ENCODE measurements at regions of chr4 and their contacts with region 1.

Region 1: DNA sequence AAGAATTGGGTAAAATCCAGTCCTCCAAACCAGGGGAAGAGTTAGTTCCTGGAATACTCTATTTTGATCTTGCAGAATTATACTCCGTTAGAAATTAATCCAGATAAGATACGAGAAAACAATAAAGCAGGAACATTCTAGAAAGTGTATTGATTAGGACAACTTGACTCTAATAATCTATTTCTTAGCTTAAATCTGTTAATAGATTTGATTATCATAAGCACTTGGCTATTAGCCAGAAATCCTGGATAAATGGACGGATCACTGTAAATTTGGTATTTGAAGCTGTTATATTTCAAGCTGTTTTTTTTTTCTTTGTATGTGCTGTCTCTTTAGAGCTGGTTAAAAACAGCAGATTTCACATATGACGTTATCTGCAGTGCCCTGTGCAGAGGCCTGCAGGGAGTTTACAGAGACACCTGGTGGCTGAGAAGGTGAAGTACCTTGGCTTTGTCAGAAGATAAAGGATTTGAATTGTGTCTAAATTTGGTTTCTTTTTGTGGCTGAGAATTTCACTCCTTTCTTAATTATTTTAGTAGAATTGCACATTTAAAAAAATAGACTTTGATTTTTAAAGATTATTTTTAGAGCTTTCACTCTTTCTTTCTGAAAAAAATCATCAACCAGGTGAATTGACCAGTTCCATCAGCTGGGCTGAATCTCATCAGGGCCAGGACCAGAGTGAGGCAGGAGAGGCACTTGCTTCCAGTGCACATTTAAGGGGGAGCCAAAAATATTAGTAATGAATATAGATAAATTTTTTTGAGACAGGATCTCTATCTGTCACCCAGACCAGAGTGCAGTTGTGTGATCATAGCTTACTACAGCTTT is 9.7 kb upstream of the CHRNA9 start:
- DNase-seq: peak; percentile 69
- H3K4me3 Mint-ChIP-seq: no peak overlapping the region
- H3K27ac Mint-ChIP-seq: no peak overlapping the region
- H3K4me1 Mint-ChIP-seq: peaks cover 18% of the 10 kb centered on the region
- H3K27me3 Mint-ChIP-seq: peaks cover 2% of the 10 kb centered on the region

Region 2: GRCh38 chr4:40149960-40150385 is 175.4 kb before region 1 on chr4:
- CTCF ChIA-PET with region 1: interaction called, 25 read pairs
- POLR2A ChIA-PET with region 1: interaction called, 3 read pairs
- DNase-seq: peak; percentile 71
- H3K4me3 Mint-ChIP-seq: no peak overlapping the region
- H3K27ac Mint-ChIP-seq: no peak overlapping the region
- H3K4me1 Mint-ChIP-seq: peaks cover 17% of the 10 kb centered on the region
- H3K27me3 Mint-ChIP-seq: no peaks in the 10 kb centered on the region

Region 3: DNA sequence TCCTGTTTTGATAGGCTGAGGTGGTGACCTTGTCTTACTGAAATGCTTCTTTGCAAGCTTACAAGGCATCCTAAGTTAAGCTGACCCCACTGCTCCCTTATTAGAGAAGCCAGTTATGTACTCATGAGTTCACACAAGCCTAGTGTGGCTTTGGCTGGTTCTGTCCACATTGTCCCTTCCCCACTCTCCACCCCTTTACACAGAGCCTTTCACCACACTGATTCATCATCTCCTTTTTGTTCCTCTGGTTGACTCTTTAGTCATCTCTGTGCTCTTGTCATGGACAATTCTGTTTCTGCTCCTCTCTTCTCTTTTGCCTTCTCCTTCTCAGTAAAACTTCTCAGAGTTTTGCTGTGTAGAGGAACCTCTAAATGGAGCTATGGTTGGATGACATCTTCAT is 14.6 kb after region 1 on chr4:
- CTCF ChIA-PET with region 1: interaction called, 18 read pairs
- POLR2A ChIA-PET with region 1: no interaction called
- DNase-seq: no peak
- H3K4me3 Mint-ChIP-seq: no peak overlapping the region
- H3K27ac Mint-ChIP-seq: no peak overlapping the region
- H3K4me1 Mint-ChIP-seq: peaks cover 4% of the 10 kb centered on the region
- H3K27me3 Mint-ChIP-seq: peaks cover 22% of the 10 kb centered on the region

Region 4: DNA sequence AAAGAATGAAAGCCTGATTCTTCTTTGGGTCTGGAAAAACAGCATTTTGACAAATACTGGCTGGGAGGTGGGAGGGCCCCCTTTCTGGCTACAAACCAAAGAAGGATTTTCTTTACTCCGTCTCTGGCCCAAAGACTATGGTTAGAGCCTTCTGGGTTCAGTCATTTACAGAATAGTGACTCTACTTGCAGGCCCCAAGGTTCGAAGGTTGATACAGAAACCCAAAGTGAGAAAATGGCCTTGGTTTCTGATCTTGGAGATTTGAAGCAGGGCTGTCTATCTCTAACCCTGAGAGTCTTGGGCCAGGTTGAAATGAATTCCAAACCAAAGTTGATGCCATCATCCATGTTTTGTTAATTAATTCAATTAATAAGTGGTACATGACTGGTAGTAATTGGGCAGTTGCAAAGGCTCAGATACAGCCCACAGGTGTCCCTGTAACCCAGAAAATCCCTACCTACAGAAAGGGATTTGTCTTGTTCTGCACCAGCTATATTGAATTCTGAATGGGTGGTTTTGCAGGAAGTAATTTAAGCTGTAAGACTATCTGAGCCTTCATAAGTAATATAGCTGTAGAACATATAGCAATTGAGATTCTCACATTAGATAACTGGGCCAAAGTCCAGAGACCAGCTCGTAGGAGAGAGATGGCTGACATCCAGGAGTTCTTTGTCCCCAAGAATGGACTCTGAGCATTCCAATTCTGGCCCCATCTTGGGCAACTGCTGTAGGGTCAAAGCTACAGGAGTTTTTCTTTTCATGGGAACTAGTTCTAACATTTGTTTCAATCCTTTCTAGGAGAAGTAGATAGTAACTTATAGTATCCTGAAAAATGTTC is 44.3 kb after region 1 on chr4:
- CTCF ChIA-PET with region 1: no interaction called
- POLR2A ChIA-PET with region 1: no interaction called
- DNase-seq: no peak
- H3K4me3 Mint-ChIP-seq: no peak overlapping the region
- H3K27ac Mint-ChIP-seq: no peak overlapping the region
- H3K4me1 Mint-ChIP-seq: peaks cover 3% of the 10 kb centered on the region
- H3K27me3 Mint-ChIP-seq: peaks cover 4% of the 10 kb centered on the region

Region 5: DNA sequence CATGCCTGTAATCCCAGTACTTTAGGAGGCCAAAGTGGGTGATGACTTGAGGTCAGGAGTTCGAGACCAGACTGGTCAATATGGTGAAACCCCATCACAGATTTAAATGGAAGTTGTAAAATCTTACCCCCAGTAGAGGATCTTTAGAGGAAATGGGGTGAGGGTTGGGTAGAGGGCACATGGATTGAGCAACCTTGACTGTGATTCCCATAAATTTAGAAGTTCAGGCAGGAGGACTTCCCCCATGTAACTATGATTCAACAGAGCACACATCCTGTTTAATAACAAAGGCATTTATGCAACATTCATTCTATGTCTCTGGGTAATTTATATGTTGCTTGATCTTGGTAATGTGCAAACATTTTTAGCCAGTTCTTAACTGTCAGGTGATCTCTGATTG is 161.1 kb after region 1 on chr4:
- CTCF ChIA-PET with region 1: no interaction called
- POLR2A ChIA-PET with region 1: no interaction called
- DNase-seq: no peak
- H3K4me3 Mint-ChIP-seq: no peak overlapping the region
- H3K27ac Mint-ChIP-seq: no peak overlapping the region
- H3K4me1 Mint-ChIP-seq: no peaks in the 10 kb centered on the region
- H3K27me3 Mint-ChIP-seq: peaks cover 44% of the 10 kb centered on the region

Region 6: GRCh38 chr4:40719008-40719623 is 393.7 kb after region 1 on chr4:
- CTCF ChIA-PET with region 1: interaction called, 12 read pairs
- POLR2A ChIA-PET with region 1: interaction called, 3 read pairs
- DNase-seq: no peak
- H3K4me3 Mint-ChIP-seq: no peak overlapping the region
- H3K27ac Mint-ChIP-seq: no peak overlapping the region
- H3K4me1 Mint-ChIP-seq: peaks cover 26% of the 10 kb centered on the region
- H3K27me3 Mint-ChIP-seq: peaks cover 3% of the 10 kb centered on the region

Measured in activated CD4-positive, alpha-beta memory T cell treated with anti-CD3 and anti-CD28 coated beads, Interleukin-2, amount 10 ng/mL, durations not matched to agents 7 days and 5 days (primary cell).